ENCODE measurements at regions of chr16 and their contacts with region 1.

Region 1: GRCh38 chr16:1705688-1706385 is at the start of gene MAPK8IP3:
- DNase-seq: peak; percentile 97

Region 2: GRCh38 chr16:1610276-1611017 is 95.4 kb before region 1 on chr16:
- CTCF ChIA-PET with region 1: interaction called, 3 read pairs
- POLR2A ChIA-PET with region 1: interaction called, 15 read pairs
- DNase-seq: peak; percentile 92

Region 3: GRCh38 chr16:1677802-1678496 is 27.9 kb before region 1 on chr16 and contains the start of gene JPT2:
- CTCF ChIA-PET with region 1: interaction called, 6 read pairs
- POLR2A ChIA-PET with region 1: interaction called, 30 read pairs
- DNase-seq: peak; percentile 98

Region 4: GRCh38 chr16:1723450-1724147 is 17.8 kb after region 1 on chr16:
- CTCF ChIA-PET with region 1: interaction called, 18 read pairs
- POLR2A ChIA-PET with region 1: interaction called, 8 read pairs
- DNase-seq: peak; percentile 67

Region 5: DNA sequence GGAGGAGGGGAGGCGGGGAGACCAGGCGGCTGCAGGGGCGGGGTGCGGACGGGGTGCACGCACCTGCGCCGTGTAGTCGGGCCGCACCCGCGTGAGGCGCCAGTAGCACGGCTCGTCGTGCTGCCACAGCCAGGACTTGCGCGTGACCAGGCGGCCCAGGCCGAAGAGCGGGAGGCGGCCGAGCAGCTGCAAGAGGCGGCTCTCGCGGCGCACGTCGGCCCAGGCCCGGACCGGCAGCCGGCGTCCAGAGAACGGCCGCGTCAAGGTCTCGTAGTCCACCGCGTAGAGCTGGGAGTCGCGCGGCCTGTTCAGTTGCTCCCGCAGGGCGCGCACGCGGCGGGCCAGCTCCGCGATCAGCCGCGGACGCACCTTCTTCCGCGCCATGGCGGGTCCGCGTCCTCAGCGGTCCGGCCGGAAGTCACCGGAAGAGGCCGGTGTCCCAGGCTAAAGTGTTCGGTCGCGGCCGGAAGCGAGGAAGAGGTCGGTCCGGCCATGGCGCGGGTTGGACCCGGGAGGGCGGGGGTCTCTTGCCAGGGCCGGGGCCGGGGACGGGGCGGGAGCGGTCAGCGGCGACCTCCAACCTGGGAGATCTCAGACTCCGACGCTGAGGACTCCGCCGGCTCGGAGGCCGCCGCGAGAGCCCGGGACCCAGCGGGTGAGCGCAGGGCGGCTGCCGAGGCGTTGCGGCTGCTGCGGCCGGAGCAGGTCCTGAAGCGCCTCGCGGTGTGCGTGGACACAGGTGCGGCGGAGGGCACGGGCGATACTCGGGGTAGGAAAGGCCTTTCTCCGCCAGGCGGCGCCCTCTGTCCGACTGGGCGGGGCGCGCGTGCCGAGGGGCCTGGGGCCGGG is 67.1 kb after region 1 on chr16 and contains the starts of genes EME2 and MRPS34:
- CTCF ChIA-PET with region 1: interaction called, 3 read pairs
- POLR2A ChIA-PET with region 1: interaction called, 20 read pairs
- DNase-seq: peak; percentile 78

Region 6: DNA sequence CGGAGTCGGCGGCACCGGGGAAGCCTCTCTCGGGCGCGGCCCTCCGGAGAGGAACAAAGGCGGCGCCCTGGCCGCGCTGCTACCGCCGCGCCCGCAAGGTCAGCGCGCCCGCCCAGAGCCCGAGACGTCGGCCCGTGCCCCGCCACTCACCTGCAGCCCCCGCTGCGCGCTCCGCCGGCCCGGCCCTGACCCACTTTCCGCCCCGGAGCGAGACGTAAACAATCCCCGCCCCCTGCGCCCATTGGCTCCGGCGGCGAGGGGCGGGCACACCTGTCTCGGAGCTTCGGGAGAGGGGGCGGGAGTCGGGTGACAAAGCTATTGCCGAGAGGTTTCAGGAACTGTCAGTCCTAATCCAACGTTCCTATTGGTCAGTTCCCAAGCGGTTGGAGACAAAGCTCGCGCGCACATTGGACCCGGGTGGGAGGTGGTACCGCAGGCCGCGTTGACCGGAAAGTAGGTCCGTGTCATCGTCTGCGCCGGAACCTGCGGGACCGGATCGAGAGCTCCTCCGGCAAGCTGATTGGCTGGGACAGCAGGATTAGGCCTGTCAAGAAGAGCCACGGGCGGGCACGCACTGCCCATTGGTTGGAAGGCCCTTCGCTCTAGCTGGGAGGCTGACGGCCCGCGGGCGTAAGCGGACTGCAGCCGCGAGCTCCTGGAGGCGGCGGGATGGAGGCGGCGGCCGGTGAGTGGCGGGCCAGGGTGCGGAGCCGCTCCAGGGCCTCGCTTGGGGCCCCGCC is 76.7 kb after region 1 on chr16 and contains the starts of genes NUBP2 and SPSB3:
- CTCF ChIA-PET with region 1: interaction called, 3 read pairs
- POLR2A ChIA-PET with region 1: interaction called, 11 read pairs
- DNase-seq: peak; percentile 94